SK-N-SH (cell line): ENCODE measurements at regions of chr6 and their contacts with region 1.

Region 1: DNA sequence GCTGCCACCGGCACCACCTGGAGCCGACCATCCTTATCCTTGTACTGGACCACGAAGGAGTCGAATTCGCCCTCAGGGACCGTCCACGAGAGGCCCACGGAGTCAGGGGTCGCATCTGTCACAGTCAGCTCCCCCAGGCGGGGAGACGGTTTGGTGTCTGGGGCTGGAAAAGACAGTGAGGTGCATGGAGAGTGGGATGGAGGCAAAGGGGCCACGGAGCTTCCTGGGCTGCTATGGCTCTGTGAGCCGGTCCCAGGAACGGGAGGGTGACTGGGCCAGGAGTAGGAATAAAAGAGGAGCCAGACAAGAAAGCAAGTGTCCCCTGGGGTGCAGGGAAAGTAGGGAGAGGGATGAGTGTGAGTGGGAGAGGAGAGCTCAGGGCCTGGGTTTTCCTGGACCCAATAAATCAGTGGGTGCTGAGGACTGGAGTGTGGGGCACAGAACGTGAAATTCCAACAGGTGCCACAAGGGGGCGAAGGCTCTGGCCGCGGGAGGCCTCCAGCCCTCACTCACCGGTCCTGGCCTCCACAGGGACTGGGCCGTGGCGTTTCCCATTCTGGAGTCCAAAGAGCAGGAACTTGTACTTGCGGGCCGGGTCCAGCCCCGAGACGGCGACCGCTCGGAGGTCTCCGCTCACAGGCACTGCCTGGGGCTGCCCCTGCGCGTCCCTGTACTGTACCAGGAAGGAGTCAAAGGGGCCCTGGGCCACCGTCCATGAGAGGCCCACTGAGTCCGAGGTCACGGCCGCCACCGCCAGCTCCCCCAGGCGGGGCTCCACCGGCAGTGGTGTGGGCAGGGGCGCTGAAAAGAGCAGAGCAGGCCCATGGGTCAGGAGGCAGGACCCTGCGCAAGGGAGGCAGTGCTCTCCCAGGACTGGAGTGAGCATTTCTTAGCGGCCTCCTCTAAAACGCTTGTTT is 9.9 kb downstream of the CYP21A2 start:
- DNase-seq: peak; percentile 88
- H3K4me3 ChIP-seq: no peak overlapping the region; a peak in 1 of 4 replicates
- H3K27ac ChIP-seq: no peak overlapping the region
- H3K4me1 ChIP-seq: peaks cover 0 to 14% of the 10 kb centered on the region in 2 experiments; a peak in 2 of 4 replicates
- H3K27me3 ChIP-seq: peaks cover 20% of the 10 kb centered on the region; the same call in 1 of the 2 replicates
- CTCF ChIP-seq: peak; percentile 73
- EP300 ChIP-seq: no peak
- RAD21 ChIP-seq: peak; percentile 58

Region 2: DNA sequence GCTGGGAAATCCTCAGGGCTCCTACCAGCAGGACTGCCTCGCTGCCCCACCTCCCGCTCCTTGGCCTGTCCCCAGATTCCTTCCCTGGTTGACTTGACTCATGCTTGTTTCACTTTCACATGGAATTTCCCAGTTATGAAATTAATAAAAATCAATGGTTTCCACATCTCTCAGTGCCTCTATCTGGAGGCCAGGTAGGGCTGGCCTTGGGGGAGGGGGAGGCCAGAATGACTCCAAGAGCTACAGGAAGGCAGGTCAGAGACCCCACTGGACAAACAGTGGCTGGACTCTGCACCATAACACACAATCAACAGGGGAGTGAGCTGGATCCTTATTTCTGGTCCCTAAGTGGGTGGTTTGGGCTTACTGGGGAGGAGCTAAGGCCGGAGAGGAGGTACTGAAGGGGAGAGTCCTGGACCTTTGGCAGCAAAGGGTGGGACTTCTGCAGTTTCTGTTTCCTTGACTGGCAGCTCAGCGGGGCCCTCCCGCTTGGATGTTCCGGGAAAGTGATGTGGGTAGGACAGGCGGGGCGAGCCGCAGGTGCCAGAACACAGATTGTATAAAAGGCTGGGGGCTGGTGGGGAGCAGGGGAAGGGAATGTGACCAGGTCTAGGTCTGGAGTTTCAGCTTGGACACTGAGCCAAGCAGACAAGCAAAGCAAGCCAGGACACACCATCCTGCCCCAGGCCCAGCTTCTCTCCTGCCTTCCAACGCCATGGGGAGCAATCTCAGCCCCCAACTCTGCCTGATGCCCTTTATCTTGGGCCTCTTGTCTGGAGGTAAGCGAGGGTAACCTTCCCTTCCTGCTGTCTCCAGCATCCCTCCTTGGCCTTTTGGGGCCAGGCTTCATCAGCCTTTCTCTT is 102.4 kb before region 1 on chr6 and contains the start of gene CFB:
- CTCF ChIA-PET with region 1: no interaction called
- POLR2A ChIA-PET with region 1: no interaction called
- DNase-seq: no peak
- H3K4me3 ChIP-seq: peak within 1 kb of the TSS; percentile 36 to 49; a peak in 3 of 4 replicates
- H3K27ac ChIP-seq: peak within 1 kb of the TSS; percentile 80 to 92
- H3K4me1 ChIP-seq: peaks cover 9 to 14% of the 10 kb centered on the region in 2 experiments; a peak in 1 of 4 replicates
- H3K27me3 ChIP-seq: no peaks in the 10 kb centered on the region
- CTCF ChIP-seq: no peak
- EP300 ChIP-seq: no peak
- RAD21 ChIP-seq: no peak
- polyA plus RNA-seq, gene CFB: 42.1 and 64.4 TPM in 2 replicates

Region 3: DNA sequence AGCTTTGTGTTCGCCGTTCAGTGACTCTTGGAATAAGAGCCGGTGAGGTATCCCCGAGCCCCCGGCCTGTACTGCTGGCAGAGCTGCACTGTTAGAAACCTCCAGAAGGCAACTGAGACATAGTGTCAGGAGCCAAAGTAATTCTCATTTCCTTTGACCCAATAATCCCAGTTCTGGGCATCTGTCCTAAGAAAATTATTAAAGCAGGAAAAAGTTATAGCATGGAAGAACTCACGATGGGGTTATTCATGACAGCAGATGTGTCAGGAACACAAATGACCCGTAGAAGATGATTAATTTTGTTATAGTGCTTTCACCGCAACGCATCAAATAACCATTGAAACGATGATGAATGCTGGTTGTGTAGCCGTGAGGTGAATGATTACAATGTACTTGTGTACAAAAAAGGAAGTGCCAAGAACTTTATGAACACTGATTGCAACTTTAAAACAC is 10.4 kb after region 1 on chr6:
- CTCF ChIA-PET with region 1: interaction called, 13 read pairs
- POLR2A ChIA-PET with region 1: no interaction called
- DNase-seq: no peak
- H3K4me3 ChIP-seq: no peak overlapping the region
- H3K27ac ChIP-seq: no peak overlapping the region
- H3K4me1 ChIP-seq: no peaks in the 10 kb centered on the region
- H3K27me3 ChIP-seq: peaks cover 18% of the 10 kb centered on the region
- CTCF ChIP-seq: no peak
- EP300 ChIP-seq: no peak
- RAD21 ChIP-seq: no peak

Region 4: DNA sequence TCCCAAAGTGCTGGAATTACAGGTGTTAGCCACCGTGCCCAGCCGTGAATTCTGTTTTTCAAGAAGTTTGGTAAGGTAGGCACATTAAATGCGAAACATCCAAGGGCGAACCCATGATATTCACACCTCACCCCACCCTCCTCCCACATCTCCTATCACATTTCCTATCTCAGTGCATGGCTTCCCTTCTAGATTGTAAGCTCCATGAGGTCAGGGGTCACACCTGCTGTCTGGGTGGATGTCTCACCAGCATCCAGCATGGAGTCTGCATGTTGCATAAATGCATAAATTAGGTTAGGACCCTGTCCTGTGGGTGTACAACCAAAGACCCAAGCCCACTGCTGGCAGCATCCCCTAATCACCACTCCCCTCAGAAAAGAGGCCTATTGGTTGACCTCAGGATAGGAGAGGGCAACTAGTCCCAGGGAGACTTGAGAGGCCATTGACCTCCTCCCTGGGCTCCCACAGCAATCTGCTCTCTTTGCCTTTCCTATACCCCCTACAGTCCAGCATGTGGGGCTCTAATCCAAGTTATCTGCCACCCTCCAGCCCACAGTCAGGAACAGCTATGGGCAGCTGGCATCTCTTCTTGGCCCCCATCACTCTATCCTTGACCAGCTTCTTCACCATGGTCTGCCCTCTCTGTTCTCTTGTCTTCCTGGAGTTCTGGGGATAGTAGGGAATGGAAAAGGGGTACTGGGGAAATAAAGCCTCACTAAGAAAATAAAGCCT is 99.5 kb after region 1 on chr6:
- CTCF ChIA-PET with region 1: no interaction called
- POLR2A ChIA-PET with region 1: no interaction called
- DNase-seq: no peak
- H3K4me3 ChIP-seq: no peak overlapping the region
- H3K27ac ChIP-seq: no peak overlapping the region
- H3K4me1 ChIP-seq: peaks cover 6 to 12% of the 10 kb centered on the region in 2 experiments; a peak in 3 of 4 replicates
- H3K27me3 ChIP-seq: no peaks in the 10 kb centered on the region
- CTCF ChIP-seq: no peak
- EP300 ChIP-seq: no peak
- RAD21 ChIP-seq: no peak